OCI-LY7 (cell line): ENCODE measurements at regions of chr6 and their contacts with region 1.

Region 1: GRCh38 chr6:119349323-119350042 is at the start of gene MAN1A1:
- DNase-seq: peak; percentile 94
- H3K4me3 ChIP-seq: peak within 1 kb of the TSS; percentile 96
- H3K27ac ChIP-seq: peak within 1 kb of the TSS; percentile 89
- H3K4me1 ChIP-seq: peaks cover 44% of the 10 kb centered on the region
- CTCF ChIP-seq: no peak
- total RNA-seq, gene MAN1A1: 72.4 and 74.2 TPM in 2 replicates

Region 2: DNA sequence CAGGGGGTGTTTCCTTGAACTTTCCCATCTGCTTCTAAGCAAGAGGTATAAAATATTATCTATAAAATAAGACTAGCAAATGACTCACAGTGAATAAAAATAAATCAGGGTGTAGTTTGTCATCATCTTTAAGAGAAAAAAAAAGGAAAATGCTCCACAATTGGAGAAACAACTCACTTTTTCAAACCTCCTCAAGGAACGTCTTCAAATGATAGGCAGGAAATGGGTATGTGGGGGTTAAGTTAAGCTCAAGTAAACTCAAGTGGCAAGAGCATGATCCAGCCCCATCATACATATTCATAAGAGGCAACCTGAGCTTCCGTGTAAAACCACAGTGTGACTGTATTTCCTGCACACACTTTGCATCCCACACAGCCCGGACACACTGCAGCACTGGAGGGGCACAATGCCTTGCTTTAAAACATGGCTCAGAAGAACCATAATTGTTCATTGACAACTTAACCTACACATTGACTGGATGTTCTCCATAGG is 639.6 kb before region 1 on chr6:
- CTCF ChIA-PET with region 1: no interaction called
- POLR2A ChIA-PET with region 1: no interaction called
- intact Hi-C with region 1: loop called (anchors 2 kb)
- DNase-seq: peak; percentile 96
- H3K4me3 ChIP-seq: peak overlapping the region; percentile 80
- H3K27ac ChIP-seq: peak overlapping the region; percentile 87
- H3K4me1 ChIP-seq: peaks cover 45% of the 10 kb centered on the region
- CTCF ChIP-seq: no peak

Region 3: GRCh38 chr6:119147101-119148053 is 202.1 kb before region 1 on chr6:
- CTCF ChIA-PET with region 1: no interaction called
- POLR2A ChIA-PET with region 1: no interaction called
- intact Hi-C with region 1: loop called (anchors 2 kb)
- DNase-seq: peak; percentile 21
- H3K4me3 ChIP-seq: no peak overlapping the region
- H3K27ac ChIP-seq: no peak overlapping the region
- H3K4me1 ChIP-seq: peaks cover 6% of the 10 kb centered on the region
- CTCF ChIP-seq: no peak

Region 4: GRCh38 chr6:119201480-119201879 is 148.0 kb before region 1 on chr6:
- CTCF ChIA-PET with region 1: no interaction called
- POLR2A ChIA-PET with region 1: no interaction called
- intact Hi-C with region 1: no loop called
- DNase-seq: no peak
- H3K4me3 ChIP-seq: no peak overlapping the region
- H3K27ac ChIP-seq: no peak overlapping the region
- H3K4me1 ChIP-seq: no peaks in the 10 kb centered on the region
- CTCF ChIP-seq: no peak

Region 5: GRCh38 chr6:119442776-119443184 is 93.3 kb after region 1 on chr6:
- CTCF ChIA-PET with region 1: interaction called, 3 read pairs
- POLR2A ChIA-PET with region 1: interaction called, 10 read pairs
- intact Hi-C with region 1: loop called (anchors 1 kb)
- DNase-seq: peak; percentile 99
- H3K4me3 ChIP-seq: peak overlapping the region; percentile 25
- H3K27ac ChIP-seq: peak overlapping the region; percentile 94
- H3K4me1 ChIP-seq: peaks cover 76% of the 10 kb centered on the region
- CTCF ChIP-seq: no peak

Region 6: DNA sequence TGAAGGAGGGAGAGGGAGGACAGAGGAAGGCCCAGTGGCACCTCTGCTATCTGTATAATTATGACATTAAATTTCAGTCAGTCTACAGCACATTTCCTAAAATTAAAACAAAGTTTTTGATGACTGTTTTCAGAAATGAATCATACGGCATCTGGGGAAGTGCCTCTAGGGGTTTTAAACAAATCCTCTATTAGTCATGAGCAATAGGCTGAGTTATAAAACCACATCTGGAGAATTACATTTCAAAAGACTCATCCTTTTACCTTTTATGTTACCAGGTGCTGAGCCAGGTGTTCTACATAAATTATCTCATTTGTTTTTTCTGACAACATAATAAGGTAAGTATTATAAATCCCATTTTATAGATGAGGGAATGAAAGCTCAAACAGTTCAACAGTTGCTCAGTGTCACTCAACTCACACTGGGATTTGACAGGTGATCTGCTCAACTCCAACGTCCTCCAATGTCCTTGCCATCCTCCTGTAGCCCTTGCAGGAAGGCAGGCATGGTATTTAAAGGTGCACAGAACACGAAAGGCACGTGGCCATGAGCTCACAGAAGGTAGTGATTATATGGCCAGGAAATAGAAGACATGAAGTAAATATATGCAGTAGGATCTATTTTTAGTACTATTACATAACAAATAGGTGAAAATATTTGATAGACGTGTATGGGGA is 184.3 kb after region 1 on chr6:
- CTCF ChIA-PET with region 1: interaction called, 3 read pairs
- POLR2A ChIA-PET with region 1: interaction called, 11 read pairs
- intact Hi-C with region 1: loop called (anchors 2 kb)
- DNase-seq: peak; percentile 85
- H3K4me3 ChIP-seq: peak overlapping the region; percentile 53
- H3K27ac ChIP-seq: peak overlapping the region; percentile 99
- H3K4me1 ChIP-seq: peaks cover 73% of the 10 kb centered on the region
- CTCF ChIP-seq: no peak

Region 7: DNA sequence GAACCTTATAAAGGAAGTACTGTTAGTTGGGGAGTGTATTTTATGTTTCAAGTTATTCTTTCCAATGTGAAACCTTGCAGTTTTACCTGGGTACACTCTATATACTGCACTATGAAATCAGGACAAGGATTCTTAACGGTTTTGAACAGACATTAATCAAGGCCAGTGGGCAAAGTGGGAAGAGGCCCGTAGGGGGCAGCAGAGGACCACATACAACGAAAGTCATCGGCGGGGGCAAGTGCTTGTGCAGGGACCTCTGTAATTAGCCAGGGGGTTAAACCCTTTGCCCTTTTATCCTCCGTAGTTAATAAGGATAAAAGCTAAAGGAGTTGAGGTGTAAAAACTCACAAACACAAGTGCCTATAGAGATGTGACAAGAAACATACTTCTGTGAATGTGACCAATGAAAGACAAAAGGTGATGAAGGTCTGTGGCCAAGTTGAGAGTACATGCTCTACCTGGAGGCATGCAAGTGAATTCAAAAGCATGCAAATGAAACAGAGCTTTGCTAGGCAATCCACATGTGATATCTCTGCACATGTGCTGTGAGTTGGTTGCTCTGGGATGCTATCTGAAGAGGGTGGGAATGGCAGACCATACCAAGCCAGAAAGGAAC is 392.8 kb after region 1 on chr6:
- CTCF ChIA-PET with region 1: no interaction called
- POLR2A ChIA-PET with region 1: interaction called, 6 read pairs
- intact Hi-C with region 1: loop called (anchors 1 kb)
- DNase-seq: peak; percentile 79
- H3K4me3 ChIP-seq: no peak overlapping the region
- H3K27ac ChIP-seq: no peak overlapping the region
- H3K4me1 ChIP-seq: peaks cover 13% of the 10 kb centered on the region
- CTCF ChIP-seq: peak; percentile 98

Region 8: GRCh38 chr6:119978274-119978889 is 628.9 kb after region 1 on chr6:
- CTCF ChIA-PET with region 1: no interaction called
- POLR2A ChIA-PET with region 1: no interaction called
- intact Hi-C with region 1: loop called (anchors 5 kb)
- DNase-seq: peak; percentile 46
- H3K4me3 ChIP-seq: no peak overlapping the region
- H3K27ac ChIP-seq: no peak overlapping the region
- H3K4me1 ChIP-seq: no peaks in the 10 kb centered on the region
- CTCF ChIP-seq: peak; percentile 83